ENCODE measurements at regions of chr4 and their contacts with region 1.

Region 1: GRCh38 chr4:16794816-16795445 is 103.5 kb downstream of the LDB2 start:
- DNase-seq: peak; percentile 85 to 93 (median 88)
- ATAC-seq: peak; percentile 94 to 98 (median 96)
- H3K4me3 ChIP-seq: no peak overlapping the region
- H3K27ac ChIP-seq: no peak overlapping the region
- H3K4me1 ChIP-seq: peaks cover 0 to 7% (median 0%) of the 10 kb centered on the region in 4 donors
- H3K27me3 ChIP-seq: no peaks in the 10 kb centered on the region
- CTCF ChIP-seq: peak; percentile 87 to 96 (median 92)
- POLR2A ChIP-seq: no peak

Region 2: GRCh38 chr4:16916719-16917337 is 121.9 kb after region 1 on chr4:
- intact Hi-C with region 1: loop called in 1 of 2 experiments (anchors 10 kb)
- DNase-seq: peak; percentile 67 to 83 (median 67)
- ATAC-seq: peak; percentile 100
- H3K4me3 ChIP-seq: no peak overlapping the region
- H3K27ac ChIP-seq: no peak overlapping the region
- H3K4me1 ChIP-seq: no peaks in the 10 kb centered on the region
- H3K27me3 ChIP-seq: no peaks in the 10 kb centered on the region
- CTCF ChIP-seq: peak; percentile 92 to 98 (median 96)
- POLR2A ChIP-seq: no peak

Region 3: DNA sequence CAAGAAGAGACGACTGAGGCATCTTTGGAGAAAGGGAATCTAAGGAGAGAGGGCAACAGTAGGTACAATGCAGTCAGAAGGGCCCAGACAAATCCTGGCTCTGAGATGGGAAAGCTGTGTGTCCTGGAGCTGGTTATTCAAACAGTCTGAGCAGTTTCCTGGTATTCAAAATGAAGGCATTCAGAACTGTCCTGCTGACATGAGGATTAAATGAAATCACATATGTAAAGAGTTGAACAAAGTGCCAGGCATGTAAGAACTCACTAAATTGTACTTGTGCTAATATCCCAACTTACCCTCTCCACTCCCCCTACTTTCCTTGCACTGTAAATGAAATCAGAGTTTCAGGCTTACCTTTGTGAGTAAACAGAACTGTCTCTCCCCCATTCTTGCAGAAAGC is 164.4 kb after region 1 on chr4:
- intact Hi-C with region 1: no loop called
- DNase-seq: no peak
- ATAC-seq: no peak
- H3K4me3 ChIP-seq: no peak overlapping the region
- H3K27ac ChIP-seq: no peak overlapping the region
- H3K4me1 ChIP-seq: no peaks in the 10 kb centered on the region
- H3K27me3 ChIP-seq: no peaks in the 10 kb centered on the region
- CTCF ChIP-seq: no peak
- POLR2A ChIP-seq: no peak